HEK293 (cell line): ENCODE measurements at regions of chrX and their contacts with region 1.

Region 1: DNA sequence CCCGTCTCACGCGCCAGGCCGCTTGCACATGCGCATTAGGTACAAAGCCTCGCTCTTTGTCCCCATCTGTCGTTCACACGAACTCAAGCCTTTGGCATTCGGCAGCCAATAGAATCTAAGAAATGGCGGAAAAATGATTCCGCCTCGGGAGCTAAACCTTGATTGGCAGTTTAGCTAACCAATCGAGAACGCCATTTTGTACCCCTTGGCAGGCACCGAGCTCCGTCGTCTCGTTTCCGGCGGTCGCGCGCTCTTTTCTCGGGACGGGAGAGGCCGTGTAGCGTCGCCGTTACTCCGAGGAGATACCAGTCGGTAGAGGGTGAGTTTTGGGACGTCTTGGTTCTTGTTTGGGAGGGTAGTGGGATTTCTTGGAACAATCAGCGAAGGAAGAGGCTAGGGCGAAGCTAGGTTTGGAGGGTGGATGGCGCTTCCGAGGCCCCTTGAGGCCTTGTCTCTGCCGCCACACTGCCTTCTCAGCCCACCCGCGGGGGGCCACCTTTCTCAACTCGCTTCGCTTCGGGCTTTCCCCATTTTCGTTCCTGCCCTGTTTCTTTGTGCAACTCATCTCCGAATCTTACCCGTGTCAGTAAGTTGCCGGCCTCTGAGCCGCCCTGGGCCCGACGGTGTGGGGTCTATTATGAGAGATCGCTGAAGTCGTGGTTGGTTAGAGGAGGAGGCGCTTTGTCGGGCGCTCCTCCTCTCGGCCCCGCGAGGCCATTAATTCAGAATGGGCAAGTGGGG is at the start of gene NONO:
- H3K4me3 ChIP-seq: peak within 1 kb of the TSS; percentile 84
- H3K27ac ChIP-seq: peak within 1 kb of the TSS; percentile 98
- H3K4me1 ChIP-seq: peaks cover 4% of the 10 kb centered on the region; the same call in 1 of the 2 replicates
- CTCF ChIP-seq: peak; percentile 6; the same call in 1 of the 2 replicates

Region 2: DNA sequence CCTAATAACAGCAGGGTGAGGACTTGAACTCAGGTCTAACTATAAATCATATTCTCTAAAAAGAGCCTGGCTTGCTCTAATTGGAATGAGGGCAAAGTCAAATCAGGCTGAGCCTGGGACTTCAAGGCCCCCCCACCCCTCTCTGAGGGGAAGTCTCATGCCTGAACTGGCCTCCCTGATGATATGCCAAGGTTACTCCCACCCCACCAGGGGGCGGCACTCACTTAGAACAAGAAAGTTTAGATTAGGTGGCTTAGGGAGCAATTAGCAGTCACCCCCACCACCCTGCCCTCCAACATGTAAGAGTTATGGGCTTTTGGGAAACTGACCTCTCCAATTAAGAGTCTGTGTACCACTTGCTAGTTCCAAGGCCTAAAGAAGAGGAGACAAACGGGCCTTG is 185.3 kb before region 1 on chrX:
- CTCF ChIA-PET with region 1: no interaction called
- POLR2A ChIA-PET with region 1: no interaction called
- H3K4me3 ChIP-seq: no peak overlapping the region
- H3K27ac ChIP-seq: no peak overlapping the region
- H3K4me1 ChIP-seq: peaks cover 3% of the 10 kb centered on the region; the same call in 1 of the 2 replicates
- CTCF ChIP-seq: no peak

Region 3: GRCh38 chrX:71254092-71254941 is 29.3 kb before region 1 on chrX and contains the start of gene ZMYM3:
- CTCF ChIA-PET with region 1: interaction called, 4 read pairs
- POLR2A ChIA-PET with region 1: interaction called, 34 read pairs
- H3K4me3 ChIP-seq: peak within 1 kb of the TSS; percentile 85
- H3K27ac ChIP-seq: peak within 1 kb of the TSS; percentile 74; the same call in 1 of the 2 replicates
- H3K4me1 ChIP-seq: peaks cover 5% of the 10 kb centered on the region; the same call in 1 of the 2 replicates
- CTCF ChIP-seq: no peak; the same call in 1 of the 2 replicates

Region 4: DNA sequence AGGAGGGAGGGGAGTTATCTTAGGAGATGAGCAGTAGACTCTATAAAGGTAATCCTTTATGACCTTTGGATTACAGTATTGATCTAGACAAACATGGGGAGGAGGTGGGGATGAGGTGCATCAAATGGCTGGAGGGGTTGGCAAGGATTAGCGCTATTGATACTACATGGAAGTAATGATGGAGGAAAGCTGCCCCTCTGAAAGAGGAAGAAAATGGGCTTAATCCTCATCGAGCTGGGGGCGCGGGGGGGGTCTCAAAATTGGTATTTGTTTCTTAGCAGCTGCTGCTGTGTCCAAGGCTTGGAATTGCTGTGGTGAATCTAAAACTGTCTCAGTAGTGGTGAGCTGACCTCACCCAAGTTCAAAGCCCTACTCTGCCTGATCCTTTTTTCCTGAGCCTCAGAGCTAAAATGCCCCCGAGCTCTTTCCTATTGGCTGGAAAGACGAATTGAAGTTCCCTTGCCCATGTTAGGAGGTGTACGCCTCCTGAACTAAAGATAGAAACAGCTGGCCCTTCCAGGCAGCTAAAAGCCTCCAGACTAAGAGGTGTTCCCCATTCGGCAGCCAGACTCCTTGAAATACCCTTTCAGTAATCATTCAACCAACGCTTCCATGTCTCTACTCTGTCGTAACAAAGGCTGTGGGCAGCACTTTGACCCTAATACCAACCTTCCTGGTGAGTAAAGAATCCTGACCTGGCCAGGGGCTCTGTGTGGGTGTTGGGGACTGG is 17.8 kb after region 1 on chrX and contains the start of gene ITGB1BP2:
- CTCF ChIA-PET with region 1: interaction called, 3 read pairs
- POLR2A ChIA-PET with region 1: interaction called, 19 read pairs
- H3K4me3 ChIP-seq: no peak within 1 kb of the TSS
- H3K27ac ChIP-seq: no peak within 1 kb of the TSS
- H3K4me1 ChIP-seq: no peaks in the 10 kb centered on the region
- CTCF ChIP-seq: no peak

Region 5: GRCh38 chrX:71320126-71320525 is 36.6 kb after region 1 on chrX:
- CTCF ChIA-PET with region 1: no interaction called
- POLR2A ChIA-PET with region 1: no interaction called
- H3K4me3 ChIP-seq: no peak overlapping the region
- H3K27ac ChIP-seq: no peak overlapping the region
- H3K4me1 ChIP-seq: no peaks in the 10 kb centered on the region
- CTCF ChIP-seq: no peak

Region 6: GRCh38 chrX:71365876-71366673 is 82.5 kb after region 1 on chrX and contains the start of gene TAF1:
- CTCF ChIA-PET with region 1: no interaction called
- POLR2A ChIA-PET with region 1: interaction called, 33 read pairs
- H3K4me3 ChIP-seq: peak within 1 kb of the TSS; percentile 76
- H3K27ac ChIP-seq: peak within 1 kb of the TSS; percentile 81
- H3K4me1 ChIP-seq: 0 out of 2 replicates have a peak, but pooled peaks cover 2% of the 10 kb centered on the region
- CTCF ChIP-seq: no peak

Region 7: DNA sequence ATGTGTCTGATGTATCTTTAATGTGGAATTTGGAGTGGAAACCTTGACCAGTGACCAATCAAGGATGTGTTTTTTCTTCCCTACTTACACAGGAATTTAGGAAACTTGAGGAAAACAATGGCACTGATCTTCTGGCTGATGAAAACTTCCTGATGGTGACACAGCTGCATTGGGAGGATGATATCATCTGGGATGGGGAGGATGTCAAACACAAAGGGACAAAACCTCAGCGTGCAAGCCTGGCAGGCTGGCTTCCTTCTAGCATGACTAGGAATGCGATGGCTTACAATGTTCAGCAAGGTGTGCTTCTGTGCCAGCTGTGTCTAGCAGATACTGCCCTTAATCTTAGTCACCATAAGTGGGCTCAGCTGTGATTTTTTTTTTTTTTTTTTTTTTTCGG is 95.2 kb after region 1 on chrX:
- CTCF ChIA-PET with region 1: no interaction called
- POLR2A ChIA-PET with region 1: no interaction called
- H3K4me3 ChIP-seq: no peak overlapping the region
- H3K27ac ChIP-seq: no peak overlapping the region
- H3K4me1 ChIP-seq: no peaks in the 10 kb centered on the region
- CTCF ChIP-seq: no peak